ENCODE measurements at regions of chr12 and their contacts with region 1.

Region 1: GRCh38 chr12:52980693-52981423 is 25.4 kb upstream of the EIF4B start:
- DNase-seq: peak; percentile 51
- ATAC-seq: peak; percentile 98
- H3K4me3 ChIP-seq: no peak overlapping the region
- H3K27ac ChIP-seq: no peak overlapping the region
- H3K4me1 ChIP-seq: no peaks in the 10 kb centered on the region
- H3K27me3 ChIP-seq: no peaks in the 10 kb centered on the region; a peak in 1 of 4 replicates
- CTCF ChIP-seq: peak; percentile 97 to 100 (median 99)
- EP300 ChIP-seq: no peak
- POLR2A ChIP-seq: no peak
- RAD21 ChIP-seq: peak; percentile 94

Region 2: GRCh38 chr12:52372216-52373154 is 608.4 kb before region 1 on chr12:
- CTCF ChIA-PET with region 1: interaction called, 3 read pairs
- POLR2A ChIA-PET with region 1: no interaction called
- RAD21 ChIA-PET with region 1: no interaction called
- SMC1A ChIA-PET with region 1: no interaction called
- in situ Hi-C with region 1: loop called (anchors 25 kb)
- intact Hi-C with region 1: loop called (anchors 2 kb)
- DNase-seq: no peak
- ATAC-seq: peak; percentile 85
- H3K4me3 ChIP-seq: no peak overlapping the region
- H3K27ac ChIP-seq: no peak overlapping the region
- H3K4me1 ChIP-seq: no peaks in the 10 kb centered on the region
- H3K27me3 ChIP-seq: peaks cover 3 to 4% of the 10 kb centered on the region in 2 experiments; a peak in 2 of 4 replicates
- CTCF ChIP-seq: peak; percentile 71 to 83 (median 79)
- EP300 ChIP-seq: no peak
- POLR2A ChIP-seq: no peak
- RAD21 ChIP-seq: peak; percentile 82

Region 3: GRCh38 chr12:52582971-52583456 is 397.8 kb before region 1 on chr12:
- CTCF ChIA-PET with region 1: interaction called, 3 read pairs
- POLR2A ChIA-PET with region 1: no interaction called
- RAD21 ChIA-PET with region 1: no interaction called
- SMC1A ChIA-PET with region 1: no interaction called
- in situ Hi-C with region 1: loop called (anchors 5 kb)
- intact Hi-C with region 1: loop called (anchors 2 kb)
- DNase-seq: no peak
- ATAC-seq: peak; percentile 90
- H3K4me3 ChIP-seq: no peak overlapping the region
- H3K27ac ChIP-seq: no peak overlapping the region
- H3K4me1 ChIP-seq: no peaks in the 10 kb centered on the region
- H3K27me3 ChIP-seq: peaks cover 0 to 5% of the 10 kb centered on the region in 2 experiments; a peak in 3 of 4 replicates
- CTCF ChIP-seq: peak; percentile 59 to 82 (median 66); a peak in 5 of 6 replicates
- EP300 ChIP-seq: no peak
- POLR2A ChIP-seq: no peak
- RAD21 ChIP-seq: peak; percentile 65

Region 4: DNA sequence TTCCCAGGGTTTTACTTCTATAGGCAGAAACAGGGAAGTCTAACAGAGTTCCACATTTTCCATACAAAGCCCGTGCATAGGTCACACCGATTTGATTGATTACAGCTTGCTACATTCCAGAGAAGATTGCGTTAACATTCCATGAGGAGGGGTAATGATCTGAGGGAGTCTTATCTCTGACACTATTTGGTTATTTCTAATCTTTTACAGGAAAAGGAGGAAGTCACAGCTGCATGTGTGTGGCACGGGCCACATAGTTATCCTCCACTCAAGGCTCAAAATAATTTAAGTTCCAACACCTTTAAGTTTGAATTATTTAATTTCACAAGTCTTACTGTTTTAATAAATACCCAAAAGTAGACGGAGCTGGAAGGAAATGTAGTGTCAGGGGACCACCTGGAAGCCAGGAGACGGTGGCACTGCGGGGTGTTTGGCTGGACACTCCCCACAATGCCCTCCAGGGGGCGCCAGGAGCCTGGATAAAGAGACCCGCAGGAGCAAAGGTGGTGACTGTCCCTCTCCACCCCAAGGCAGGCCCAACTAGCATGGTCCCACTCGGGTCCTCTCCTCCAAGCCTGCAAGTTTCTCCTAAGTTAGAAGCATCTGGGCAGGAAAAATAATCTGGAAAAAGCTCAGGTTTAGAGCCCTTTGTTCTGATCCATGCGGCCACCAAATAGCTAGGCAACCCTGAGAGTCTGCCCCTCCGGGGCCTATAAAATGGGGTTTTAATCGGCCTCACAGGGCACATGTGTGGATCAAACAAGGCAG is 96.1 kb before region 1 on chr12:
- CTCF ChIA-PET with region 1: interaction called, 418 read pairs
- POLR2A ChIA-PET with region 1: interaction called, 5 read pairs
- RAD21 ChIA-PET with region 1: interaction called, 95 read pairs
- SMC1A ChIA-PET with region 1: interaction called, 115 read pairs
- in situ Hi-C with region 1: loop called (anchors 5 kb)
- intact Hi-C with region 1: loop called (anchors 1 kb)
- DNase-seq: no peak
- ATAC-seq: peak; percentile 96
- H3K4me3 ChIP-seq: no peak overlapping the region
- H3K27ac ChIP-seq: no peak overlapping the region
- H3K4me1 ChIP-seq: no peaks in the 10 kb centered on the region
- H3K27me3 ChIP-seq: no peaks in the 10 kb centered on the region; a peak in 1 of 4 replicates
- CTCF ChIP-seq: peak; percentile 83 to 88 (median 87)
- EP300 ChIP-seq: no peak
- POLR2A ChIP-seq: no peak
- RAD21 ChIP-seq: peak; percentile 88

Region 5: DNA sequence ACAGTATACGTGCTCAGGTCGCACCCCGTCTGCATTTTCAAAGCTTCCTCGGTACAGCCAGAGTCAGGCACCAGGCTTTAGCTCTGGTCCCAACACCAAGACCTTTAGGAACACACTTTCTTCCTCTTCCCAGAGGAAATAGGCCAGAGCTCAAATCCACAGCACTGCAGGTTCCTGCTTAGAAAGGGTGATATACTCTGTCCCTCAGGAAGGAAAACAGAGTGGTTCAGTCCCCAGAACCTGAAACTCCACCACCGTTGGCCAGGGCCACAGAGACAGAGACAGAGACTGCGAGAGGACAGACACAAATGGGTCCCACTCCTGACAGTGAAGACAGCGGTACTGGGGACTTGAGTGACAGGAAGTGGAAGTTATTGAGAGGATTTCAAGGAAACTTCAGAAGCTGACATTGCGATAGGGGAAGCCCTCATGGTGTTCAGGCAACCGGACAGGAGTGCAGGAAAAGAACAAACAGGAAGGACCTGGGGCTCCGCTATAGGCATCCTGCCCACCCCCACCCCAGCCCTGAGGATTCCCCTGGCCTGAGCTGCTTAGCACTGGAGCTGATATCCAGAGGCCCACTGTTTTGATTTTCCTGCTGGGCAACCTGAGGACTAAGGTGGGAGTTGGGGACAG is 70.5 kb before region 1 on chr12:
- CTCF ChIA-PET with region 1: interaction called, 11 read pairs
- POLR2A ChIA-PET with region 1: no interaction called
- RAD21 ChIA-PET with region 1: no interaction called
- SMC1A ChIA-PET with region 1: no interaction called
- in situ Hi-C with region 1: no loop called
- intact Hi-C with region 1: no loop called
- DNase-seq: no peak
- ATAC-seq: no peak
- H3K4me3 ChIP-seq: no peak overlapping the region
- H3K27ac ChIP-seq: no peak overlapping the region
- H3K4me1 ChIP-seq: peaks cover 12% of the 10 kb centered on the region
- H3K27me3 ChIP-seq: peaks cover 0 to 3% of the 10 kb centered on the region in 2 experiments; a peak in 3 of 4 replicates
- CTCF ChIP-seq: no peak
- EP300 ChIP-seq: no peak
- POLR2A ChIP-seq: no peak
- RAD21 ChIP-seq: no peak

Region 6: GRCh38 chr12:53005986-53006809 is 25.3 kb after region 1 on chr12 and contains the start of gene EIF4B:
- CTCF ChIA-PET with region 1: interaction called, 14 read pairs
- POLR2A ChIA-PET with region 1: no interaction called
- RAD21 ChIA-PET with region 1: interaction called, 4 read pairs
- SMC1A ChIA-PET with region 1: no interaction called
- in situ Hi-C with region 1: no loop called
- intact Hi-C with region 1: no loop called
- DNase-seq: peak; percentile 99
- ATAC-seq: peak; percentile 95
- H3K4me3 ChIP-seq: peak within 1 kb of the TSS; percentile 91
- H3K27ac ChIP-seq: peak within 1 kb of the TSS; percentile 95
- H3K4me1 ChIP-seq: peaks cover 2% of the 10 kb centered on the region; the same call in 1 of the 2 replicates
- H3K27me3 ChIP-seq: no peaks in the 10 kb centered on the region
- CTCF ChIP-seq: no peak
- EP300 ChIP-seq: 0 out of 4 replicates have a peak, but pooled peaks have one; percentile 30 to 43
- POLR2A ChIP-seq: peak; percentile 81
- RAD21 ChIP-seq: no peak
- polyA plus RNA-seq, gene EIF4B: 133 to 144 TPM